ENCODE measurements at regions of chr3 and their contacts with region 1.

Region 1: GRCh38 chr3:149771652-149772271 is 19.5 kb upstream of the COMMD2 start:
- DNase-seq: peak; percentile 62
- ATAC-seq: peak; percentile 61
- H3K4me3 Mint-ChIP-seq: no peak overlapping the region
- H3K27ac Mint-ChIP-seq: no peak overlapping the region
- H3K4me1 Mint-ChIP-seq: no peaks in the 10 kb centered on the region
- H3K27me3 Mint-ChIP-seq: peaks cover 9% of the 10 kb centered on the region
- CTCF ChIP-seq: peak; percentile 76

Region 2: DNA sequence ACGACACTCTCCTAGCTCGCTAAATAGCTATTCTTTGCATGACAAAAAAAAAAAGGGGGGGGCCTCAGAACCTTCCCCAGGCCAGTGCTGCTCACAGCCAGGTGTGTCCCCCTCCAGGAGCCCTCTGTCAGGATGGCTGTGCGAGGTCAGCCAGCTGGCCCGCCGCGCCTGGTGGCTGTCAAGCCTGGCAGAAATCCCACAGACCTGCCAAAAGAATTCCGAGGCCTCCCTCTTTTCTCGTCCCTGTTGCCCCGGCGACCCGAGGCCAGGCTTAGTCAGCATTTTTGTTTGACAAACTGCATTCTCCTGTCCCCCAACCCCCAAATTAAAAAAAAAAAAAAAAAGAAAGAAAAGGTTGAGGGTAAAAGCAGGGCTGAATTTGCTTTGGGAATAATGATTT is 235.3 kb before region 1 on chr3:
- CTCF ChIA-PET with region 1: interaction called, 21 read pairs
- POLR2A ChIA-PET with region 1: no interaction called
- intact Hi-C with region 1: no loop called
- DNase-seq: no peak
- ATAC-seq: no peak
- H3K4me3 Mint-ChIP-seq: no peak overlapping the region
- H3K27ac Mint-ChIP-seq: no peak overlapping the region
- H3K4me1 Mint-ChIP-seq: peaks cover 6% of the 10 kb centered on the region
- H3K27me3 Mint-ChIP-seq: peaks cover 4% of the 10 kb centered on the region
- CTCF ChIP-seq: no peak

Region 3: DNA sequence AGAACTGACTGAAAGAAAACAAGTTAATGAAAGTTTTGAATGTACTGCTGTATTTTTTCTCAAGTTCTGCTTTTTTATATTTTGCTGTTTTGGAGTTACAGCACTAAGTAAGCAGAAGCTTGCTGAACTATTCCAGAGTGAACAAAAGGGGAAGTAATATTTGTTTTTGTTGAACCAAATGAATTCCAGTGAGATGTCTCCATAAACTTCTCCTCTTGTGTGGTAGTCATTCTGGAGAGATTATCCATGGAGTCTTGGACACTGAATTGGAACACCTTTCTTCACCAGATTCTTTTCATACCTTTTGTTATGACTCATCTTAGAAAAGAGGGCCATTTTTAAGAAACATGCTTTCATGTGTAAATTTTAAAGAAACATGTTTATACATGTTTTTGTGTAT is 11.8 kb after region 1 on chr3:
- CTCF ChIA-PET with region 1: interaction called, 19 read pairs
- POLR2A ChIA-PET with region 1: no interaction called
- intact Hi-C with region 1: no loop called
- DNase-seq: no peak
- ATAC-seq: no peak
- H3K4me3 Mint-ChIP-seq: no peak overlapping the region
- H3K27ac Mint-ChIP-seq: no peak overlapping the region
- H3K4me1 Mint-ChIP-seq: no peaks in the 10 kb centered on the region
- H3K27me3 Mint-ChIP-seq: peaks cover 7% of the 10 kb centered on the region
- CTCF ChIP-seq: no peak

Measured in activated CD8-positive, alpha-beta T cell treated with anti-CD3 and anti-CD28 coated beads for 36 hours (primary cell).